Psoas muscle (tissue), 8 donors: ENCODE measurements at regions of chr19 and their contacts with region 1.

Region 1: DNA sequence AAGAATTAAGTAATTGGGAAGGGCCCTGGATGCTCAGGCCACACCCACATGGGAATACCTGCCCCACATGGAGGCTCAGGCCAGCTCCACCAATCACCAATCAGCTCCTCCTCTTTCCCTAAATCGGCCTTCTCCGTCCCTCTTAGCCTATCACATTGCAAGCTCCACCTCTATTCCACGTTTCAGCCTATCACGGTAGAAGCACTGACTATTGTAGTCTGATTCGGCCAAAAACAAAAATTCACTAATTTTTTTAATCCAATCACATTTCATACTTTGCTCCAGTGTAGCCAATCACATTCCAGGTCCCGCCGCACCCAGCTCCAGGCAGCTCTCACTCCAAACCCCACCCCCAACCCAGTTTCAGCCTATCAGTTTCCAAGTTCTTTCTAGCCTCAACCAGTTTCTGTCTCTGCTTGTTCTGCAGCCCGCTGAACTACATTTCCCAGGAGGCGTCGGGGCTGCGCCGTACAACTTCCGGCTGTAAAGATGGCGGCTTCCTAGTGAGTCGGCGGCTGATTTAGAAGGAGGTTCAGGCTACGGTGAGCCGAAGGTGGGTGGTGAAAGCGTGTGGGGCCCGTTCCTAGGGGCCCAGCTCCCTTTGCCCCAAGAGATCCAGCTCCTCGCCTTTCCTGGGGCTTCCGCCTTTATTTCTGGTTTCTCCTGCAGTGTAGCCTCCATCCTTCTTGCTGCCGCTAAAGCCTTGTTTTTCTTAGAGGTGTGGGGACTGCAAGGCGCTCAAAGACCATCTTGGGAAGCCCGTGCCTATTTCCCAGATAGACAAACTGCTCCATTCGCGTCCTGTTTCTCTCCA is at the start of gene BABAM1:
- DNase-seq: peak; percentile 93 to 96
- ATAC-seq: peak; percentile 96 to 99 (median 97)
- H3K4me3 ChIP-seq: peak within 1 kb of the TSS; percentile 89
- H3K27ac ChIP-seq: peak within 1 kb of the TSS; percentile 79
- H3K4me1 ChIP-seq: peaks cover 7% of the 10 kb centered on the region
- H3K27me3 ChIP-seq: no peaks in the 10 kb centered on the region
- CTCF ChIP-seq: no peak
- total RNA-seq, gene BABAM1: 70.0 to 97.0 (median 88.7) TPM

Region 2: GRCh38 chr19:17215125-17215971 is 51.8 kb before region 1 on chr19 and contains the start of gene USE1:
- intact Hi-C with region 1: loop called in 1 of 2 experiments (anchors 2 kb)
- DNase-seq: peak; percentile 90 to 95
- ATAC-seq: peak; percentile 94 to 97 (median 95)
- H3K4me3 ChIP-seq: peak within 1 kb of the TSS; percentile 84
- H3K27ac ChIP-seq: peak within 1 kb of the TSS; percentile 95
- H3K4me1 ChIP-seq: peaks cover 5% of the 10 kb centered on the region
- H3K27me3 ChIP-seq: no peaks in the 10 kb centered on the region
- CTCF ChIP-seq: no peak
- total RNA-seq, gene USE1: 25.5 to 41.2 (median 30.5) TPM

Region 3: GRCh38 chr19:17226002-17226933 is 40.9 kb before region 1 on chr19 and contains the start of gene OCEL1:
- intact Hi-C with region 1: no loop called
- DNase-seq: peak; percentile 99
- ATAC-seq: peak; percentile 95 to 97 (median 96)
- H3K4me3 ChIP-seq: peak within 1 kb of the TSS; percentile 80
- H3K27ac ChIP-seq: peak within 1 kb of the TSS; percentile 92
- H3K4me1 ChIP-seq: peaks cover 14% of the 10 kb centered on the region
- H3K27me3 ChIP-seq: no peaks in the 10 kb centered on the region
- CTCF ChIP-seq: no peak
- total RNA-seq, gene OCEL1: 15.6 to 20.8 (median 18.5) TPM

Region 4: DNA sequence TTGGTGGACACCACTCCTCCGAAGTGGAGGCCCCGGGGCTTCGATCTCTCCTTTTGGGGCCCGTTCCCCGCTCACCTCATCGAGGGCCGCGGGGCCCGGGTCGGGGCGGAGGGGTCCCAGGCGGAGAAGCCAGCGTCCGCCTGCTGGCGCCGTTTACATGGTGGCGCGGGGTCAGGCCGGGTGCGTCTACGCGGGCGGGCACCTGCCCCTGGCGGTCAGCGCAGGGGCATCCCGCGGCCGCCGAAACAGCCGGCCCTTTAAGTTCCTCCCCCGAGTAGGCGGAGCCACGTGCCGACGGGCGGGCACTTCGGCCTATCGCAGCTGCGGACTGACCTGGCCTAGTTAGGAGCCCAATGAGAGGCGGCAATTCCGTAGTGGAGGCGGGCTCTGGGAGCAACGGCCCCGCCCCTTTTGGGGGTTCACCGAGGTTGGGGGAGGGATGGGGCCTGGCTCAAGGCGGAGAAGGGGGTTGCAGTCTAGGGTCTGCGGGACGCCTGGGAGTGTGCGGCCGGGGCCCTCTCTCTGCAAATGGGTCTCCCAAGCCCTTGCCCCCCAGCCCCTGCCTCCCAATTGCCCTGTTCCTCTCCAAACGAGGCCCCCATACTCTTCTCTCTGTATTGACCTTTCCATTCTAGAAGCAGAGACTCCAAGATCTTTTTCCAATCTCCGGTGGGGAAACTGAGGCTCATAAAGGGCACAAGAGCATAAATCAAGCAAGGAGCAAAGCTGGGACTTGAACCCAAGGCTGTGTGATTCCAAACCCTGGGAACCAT is 36.2 kb after region 1 on chr19 and contains the start of gene ABHD8:
- intact Hi-C with region 1: no loop called
- DNase-seq: peak; percentile 97 to 99
- ATAC-seq: peak; percentile 84 to 88 (median 84)
- H3K4me3 ChIP-seq: peak within 1 kb of the TSS; percentile 93
- H3K27ac ChIP-seq: peak within 1 kb of the TSS; percentile 86
- H3K4me1 ChIP-seq: peaks cover 32% of the 10 kb centered on the region
- H3K27me3 ChIP-seq: no peaks in the 10 kb centered on the region
- CTCF ChIP-seq: peak; percentile 60
- total RNA-seq, gene ABHD8: 6.1 to 17.9 (median 7.6) TPM

Region 5: GRCh38 chr19:17616961-17617806 is 350.0 kb after region 1 on chr19:
- intact Hi-C with region 1: no loop called
- DNase-seq: no peak
- ATAC-seq: no peak
- H3K4me3 ChIP-seq: peak overlapping the region; percentile 18
- H3K27ac ChIP-seq: no peak overlapping the region
- H3K4me1 ChIP-seq: no peaks in the 10 kb centered on the region
- H3K27me3 ChIP-seq: peaks cover 0 to 37% (median 7%) of the 10 kb centered on the region in 3 donors
- CTCF ChIP-seq: no peak